ENCODE measurements at regions of chr12 and their contacts with region 1.

Region 1: GRCh38 chr12:105382771-105383622 is 52.5 kb downstream of the C12orf75 start:
- DNase-seq: peak; percentile 73
- H3K4me3 Mint-ChIP-seq: no peak overlapping the region
- H3K27ac Mint-ChIP-seq: no peak overlapping the region
- H3K4me1 Mint-ChIP-seq: peaks cover 6% of the 10 kb centered on the region
- H3K27me3 Mint-ChIP-seq: no peaks in the 10 kb centered on the region
- CTCF ChIP-seq: peak; percentile 73

Region 2: DNA sequence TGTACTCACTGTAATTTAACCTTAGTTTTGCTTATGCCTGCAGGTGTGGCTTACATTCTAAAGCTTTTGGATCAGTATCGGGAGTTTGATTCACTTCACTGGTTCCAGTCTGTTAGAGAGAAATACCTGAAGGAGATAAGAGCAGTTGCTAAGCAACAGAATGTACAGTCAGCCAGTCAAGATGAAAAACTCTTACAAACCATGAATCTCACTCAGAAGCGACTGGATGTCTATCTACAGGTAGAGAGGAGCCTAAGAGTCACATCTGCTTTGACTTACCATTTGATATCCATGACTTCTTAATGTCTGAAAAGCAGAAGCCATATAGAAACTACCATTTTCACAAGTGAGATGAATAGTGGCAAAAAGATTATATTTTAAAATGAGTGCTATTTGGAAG is 218.9 kb before region 1 on chr12:
- CTCF ChIA-PET with region 1: interaction called, 13 read pairs
- POLR2A ChIA-PET with region 1: no interaction called
- intact Hi-C with region 1: loop called (anchors 10 kb)
- DNase-seq: no peak
- H3K4me3 Mint-ChIP-seq: no peak overlapping the region
- H3K27ac Mint-ChIP-seq: no peak overlapping the region
- H3K4me1 Mint-ChIP-seq: no peaks in the 10 kb centered on the region
- H3K27me3 Mint-ChIP-seq: no peaks in the 10 kb centered on the region
- CTCF ChIP-seq: no peak

Region 3: DNA sequence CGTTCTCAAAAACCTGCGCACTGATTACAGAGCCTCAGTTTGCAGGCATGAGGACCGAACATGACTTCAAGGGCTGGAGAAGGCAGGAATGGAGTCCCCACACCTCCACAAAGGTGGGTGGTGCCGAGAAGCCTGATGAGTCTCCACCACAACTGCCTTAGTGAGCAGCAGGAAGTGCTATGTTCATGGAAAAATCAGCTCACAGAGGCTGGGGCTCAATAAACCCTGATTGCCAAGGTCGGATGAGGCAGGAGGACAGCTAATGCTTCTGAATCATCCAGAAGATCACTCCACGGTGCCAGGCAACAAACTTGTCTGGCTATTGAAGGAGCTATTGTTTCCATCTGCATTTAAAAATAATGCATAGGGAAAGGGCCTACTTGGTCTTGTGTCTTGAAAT is 178.1 kb before region 1 on chr12:
- CTCF ChIA-PET with region 1: interaction called, 5 read pairs
- POLR2A ChIA-PET with region 1: interaction called, 4 read pairs
- intact Hi-C with region 1: loop called (anchors 10 kb)
- DNase-seq: no peak
- H3K4me3 Mint-ChIP-seq: no peak overlapping the region
- H3K27ac Mint-ChIP-seq: no peak overlapping the region
- H3K4me1 Mint-ChIP-seq: no peaks in the 10 kb centered on the region
- H3K27me3 Mint-ChIP-seq: no peaks in the 10 kb centered on the region
- CTCF ChIP-seq: no peak

Region 4: DNA sequence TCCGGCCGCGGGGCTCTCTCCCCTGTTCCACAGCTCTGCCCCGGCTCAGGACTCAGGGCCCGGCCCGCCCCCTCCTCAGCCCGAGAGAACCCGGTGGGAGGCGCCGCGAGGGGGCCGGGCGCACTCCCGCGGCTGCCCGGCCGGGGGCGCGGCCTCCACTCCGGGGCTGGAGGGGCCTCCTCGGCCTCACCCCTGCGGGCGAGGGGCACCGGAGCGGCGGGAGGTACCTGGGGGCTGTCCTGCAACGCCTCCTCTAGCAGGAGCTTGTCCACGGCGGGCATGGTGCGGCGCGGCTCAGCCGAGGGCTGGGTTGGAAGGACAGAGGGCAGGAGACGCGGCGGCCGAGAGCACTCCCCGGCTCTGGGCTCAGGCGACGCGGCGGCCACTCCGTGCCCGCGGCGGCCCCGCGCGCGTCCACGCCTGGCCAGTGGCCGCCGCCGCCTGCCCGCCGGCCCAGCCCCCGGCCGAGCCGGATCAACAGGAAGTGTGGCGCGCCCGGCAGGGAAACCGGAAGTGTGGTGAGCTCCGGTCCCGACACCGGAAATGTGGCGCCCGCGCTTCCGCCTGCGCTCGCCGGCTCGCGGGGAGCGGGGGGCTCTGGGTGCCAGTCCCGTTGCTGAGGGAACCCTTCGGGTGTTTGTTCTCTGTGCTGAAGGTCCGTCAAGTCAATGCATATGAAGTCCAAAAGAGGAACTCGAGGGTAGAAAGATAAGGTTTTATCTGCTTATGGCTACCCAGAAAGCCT is 147.1 kb before region 1 on chr12 and contains the start of gene APPL2:
- CTCF ChIA-PET with region 1: interaction called, 6 read pairs
- POLR2A ChIA-PET with region 1: interaction called, 16 read pairs
- intact Hi-C with region 1: loop called (anchors 1 kb)
- DNase-seq: peak; percentile 86
- H3K4me3 Mint-ChIP-seq: peak within 1 kb of the TSS; percentile 87
- H3K27ac Mint-ChIP-seq: peak within 1 kb of the TSS; percentile 90
- H3K4me1 Mint-ChIP-seq: peaks cover 24% of the 10 kb centered on the region
- H3K27me3 Mint-ChIP-seq: no peaks in the 10 kb centered on the region
- CTCF ChIP-seq: peak; percentile 25
- total RNA-seq, gene APPL2: 32.5 and 35.5 TPM in 2 replicates

Region 5: GRCh38 chr12:105279460-105280056 is 103.4 kb before region 1 on chr12:
- CTCF ChIA-PET with region 1: interaction called, 6 read pairs
- POLR2A ChIA-PET with region 1: interaction called, 3 read pairs
- intact Hi-C with region 1: loop called (anchors 1 kb)
- DNase-seq: peak; percentile 47
- H3K4me3 Mint-ChIP-seq: no peak overlapping the region
- H3K27ac Mint-ChIP-seq: no peak overlapping the region
- H3K4me1 Mint-ChIP-seq: peaks cover 6% of the 10 kb centered on the region
- H3K27me3 Mint-ChIP-seq: peaks cover 13% of the 10 kb centered on the region
- CTCF ChIP-seq: peak; percentile 43

Region 6: GRCh38 chr12:105574056-105574702 is 191.2 kb after region 1 on chr12:
- CTCF ChIA-PET with region 1: no interaction called
- POLR2A ChIA-PET with region 1: no interaction called
- intact Hi-C with region 1: no loop called
- DNase-seq: peak; percentile 46
- H3K4me3 Mint-ChIP-seq: no peak overlapping the region
- H3K27ac Mint-ChIP-seq: no peak overlapping the region
- H3K4me1 Mint-ChIP-seq: peaks cover 7% of the 10 kb centered on the region
- H3K27me3 Mint-ChIP-seq: no peaks in the 10 kb centered on the region
- CTCF ChIP-seq: no peak